Activated T-helper 1 cell treated with anti-CD3 and anti-CD28 coated beads, Interleukin-12 subunit alpha, Interleukin-12 subunit beta, Interleukin-2, Interleukin-4 antibody, amounts not matched to agents 30 ng/mL and 10 ng/mL and 1 ng/mL, durations not matched to agents 14 hours and 24 hours and 36 hours (primary cell): ENCODE measurements at regions of chr10 and their contacts with region 1.

Region 1: GRCh38 chr10:60728056-60728455 is 50.2 kb upstream of the CDK1 start:
- DNase-seq: peak; percentile 44
- H3K4me3 Mint-ChIP-seq: peak overlapping the region; percentile 69
- H3K27ac Mint-ChIP-seq: peak overlapping the region; percentile 77
- H3K4me1 Mint-ChIP-seq: peaks cover 90% of the 10 kb centered on the region
- H3K27me3 Mint-ChIP-seq: peaks cover 2% of the 10 kb centered on the region

Region 2: DNA sequence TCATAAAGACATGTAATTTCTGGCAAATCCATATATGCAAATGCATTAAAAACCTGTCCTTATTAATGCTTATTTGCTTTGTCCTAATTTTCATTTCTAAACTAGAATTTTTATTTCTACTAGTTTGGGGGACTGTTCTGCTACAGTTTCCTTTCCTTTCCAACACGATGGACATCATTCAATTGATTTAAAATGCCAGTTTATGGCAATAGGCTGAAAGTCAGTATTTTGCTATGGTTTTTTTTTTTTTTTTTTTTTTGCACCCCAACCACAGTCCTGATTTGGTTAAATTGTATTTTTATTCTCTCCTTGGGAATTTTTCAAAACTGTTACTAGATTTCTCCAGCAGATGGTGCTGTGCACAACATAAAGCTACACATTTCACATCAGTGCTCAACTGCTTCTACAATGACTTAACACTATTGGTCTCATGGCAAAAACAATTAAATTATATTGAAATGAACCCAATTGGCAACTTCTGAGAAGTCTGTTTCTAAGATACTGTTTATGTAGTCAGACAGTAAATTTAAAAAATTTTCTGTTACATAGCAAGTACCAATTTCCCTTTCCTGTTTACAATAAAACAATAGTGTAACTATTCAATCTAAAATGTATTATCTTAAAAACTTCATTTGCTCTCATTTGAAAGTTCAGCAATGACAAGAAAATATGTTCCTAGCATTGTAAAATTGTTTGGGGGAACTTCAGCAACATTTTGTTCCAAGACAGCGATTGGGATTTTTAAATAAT is 627.9 kb before region 1 on chr10:
- intact Hi-C with region 1: no loop called
- DNase-seq: no peak
- H3K4me3 Mint-ChIP-seq: no peak overlapping the region
- H3K27ac Mint-ChIP-seq: no peak overlapping the region
- H3K4me1 Mint-ChIP-seq: no peaks in the 10 kb centered on the region
- H3K27me3 Mint-ChIP-seq: no peaks in the 10 kb centered on the region

Region 3: DNA sequence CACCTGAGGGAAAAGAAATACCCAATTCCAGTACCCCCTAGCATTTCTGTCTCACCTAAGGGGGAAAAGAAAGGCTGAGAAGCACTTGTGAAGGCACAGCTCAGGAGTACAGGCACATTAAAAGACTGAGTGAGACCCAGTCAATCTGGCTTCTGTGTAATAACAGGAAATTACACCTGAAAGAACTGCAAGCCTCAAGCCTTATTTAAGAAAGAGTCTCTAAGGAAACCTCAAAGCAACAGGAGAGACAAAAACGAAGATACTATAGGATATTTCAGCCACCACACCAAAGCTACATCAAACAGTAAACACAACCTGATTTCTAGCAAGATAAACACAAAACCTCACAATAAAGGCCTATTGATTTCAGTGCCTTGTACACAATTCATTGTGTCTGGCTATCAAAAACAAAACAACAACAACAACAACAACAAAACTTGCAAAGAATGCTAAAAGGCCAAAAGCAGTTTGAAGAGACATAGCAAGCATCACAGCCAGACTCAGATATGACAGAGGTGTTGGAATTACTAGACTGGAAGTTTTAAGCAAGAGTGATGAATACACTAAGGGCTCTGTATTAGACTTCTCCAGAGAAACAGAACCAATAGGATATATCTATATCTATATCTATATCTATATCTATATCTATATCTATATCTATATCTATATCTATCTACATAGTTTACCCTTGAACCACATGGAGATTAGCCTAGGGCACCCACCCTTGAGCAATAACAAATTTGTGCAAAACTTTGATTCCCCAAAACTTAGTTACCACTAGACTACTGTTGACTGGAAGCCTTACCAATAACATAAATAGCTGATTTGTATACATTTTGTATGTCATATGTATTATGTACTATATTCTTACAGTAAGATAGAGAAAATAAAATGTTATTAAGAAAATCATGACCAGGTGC is 19.1 kb before region 1 on chr10:
- intact Hi-C with region 1: loop called (anchors 1 kb)
- DNase-seq: no peak
- H3K4me3 Mint-ChIP-seq: peak overlapping the region; percentile 69
- H3K27ac Mint-ChIP-seq: peak overlapping the region; percentile 95
- H3K4me1 Mint-ChIP-seq: peaks cover 71% of the 10 kb centered on the region
- H3K27me3 Mint-ChIP-seq: no peaks in the 10 kb centered on the region

Region 4: GRCh38 chr10:60714233-60714632 is 13.8 kb before region 1 on chr10:
- intact Hi-C with region 1: loop called (anchors 1 kb)
- DNase-seq: no peak
- H3K4me3 Mint-ChIP-seq: peak overlapping the region; percentile 24
- H3K27ac Mint-ChIP-seq: peak overlapping the region; percentile 61
- H3K4me1 Mint-ChIP-seq: peaks cover 67% of the 10 kb centered on the region
- H3K27me3 Mint-ChIP-seq: no peaks in the 10 kb centered on the region

Region 5: GRCh38 chr10:60964257-60965235 is 236.5 kb after region 1 on chr10:
- intact Hi-C with region 1: no loop called
- DNase-seq: peak; percentile 23
- H3K4me3 Mint-ChIP-seq: no peak overlapping the region
- H3K27ac Mint-ChIP-seq: no peak overlapping the region
- H3K4me1 Mint-ChIP-seq: peaks cover 34% of the 10 kb centered on the region
- H3K27me3 Mint-ChIP-seq: peaks cover 18% of the 10 kb centered on the region